ENCODE measurements at regions of chr12 and their contacts with region 1.

Region 1: GRCh38 chr12:112424126-112424525 is 5.4 kb downstream of the PTPN11 start:
- DNase-seq: no peak
- ATAC-seq: no peak
- H3K4me3 ChIP-seq: no peak overlapping the region
- H3K4me3 Mint-ChIP-seq: peak overlapping the region in 5 of 10 donors; percentile 0 to 39 (median 9)
- H3K27ac ChIP-seq: no peak overlapping the region
- H3K27ac Mint-ChIP-seq: peak overlapping the region in 3 of 9 donors; percentile 0 to 6 (median 2)
- H3K4me1 ChIP-seq: peaks cover 30 to 31% of the 10 kb centered on the region in 2 donors
- H3K4me1 Mint-ChIP-seq: peaks cover 33 to 67% (median 57%) of the 10 kb centered on the region in 7 donors
- H3K27me3 ChIP-seq: no peaks in the 10 kb centered on the region
- H3K27me3 Mint-ChIP-seq: no peaks in the 10 kb centered on the region

Region 2: DNA sequence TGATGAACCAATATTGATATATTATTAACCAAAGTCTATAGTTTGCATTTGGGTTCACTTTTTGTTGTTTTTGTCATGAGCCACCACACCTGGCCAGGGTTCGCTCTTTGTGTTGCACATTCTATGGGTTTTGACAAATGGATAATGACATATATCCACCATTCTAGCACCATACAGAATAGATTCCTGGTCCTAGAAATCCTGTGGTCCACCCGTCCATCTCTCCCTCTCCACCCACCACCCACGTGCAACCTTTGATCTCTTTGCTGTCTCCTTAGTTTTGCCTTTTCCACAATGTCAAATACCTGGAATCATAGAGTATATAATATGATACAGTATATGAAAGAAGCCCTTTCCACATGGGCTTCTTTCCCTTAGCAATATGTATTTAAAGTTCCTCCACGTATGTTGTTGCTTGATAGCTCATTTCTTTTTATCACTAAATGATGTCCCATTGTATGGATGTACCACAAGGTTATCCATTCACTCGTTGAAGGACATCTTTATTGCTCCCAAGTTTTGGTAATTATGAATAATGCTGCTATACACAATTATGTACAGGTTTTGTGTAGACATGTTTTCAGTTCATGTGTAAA is 22.1 kb before region 1 on chr12:
- CTCF ChIA-PET with region 1: no interaction called
- POLR2A ChIA-PET with region 1: no interaction called
- intact Hi-C with region 1: no loop called
- DNase-seq: no peak
- ATAC-seq: no peak
- H3K4me3 ChIP-seq: no peak overlapping the region
- H3K4me3 Mint-ChIP-seq: no peak overlapping the region
- H3K27ac ChIP-seq: no peak overlapping the region
- H3K27ac Mint-ChIP-seq: peak overlapping the region in 1 of 9 donors; percentile 26
- H3K4me1 ChIP-seq: peaks cover 0 to 2% of the 10 kb centered on the region in 2 donors
- H3K4me1 Mint-ChIP-seq: peaks cover under 1 to 16% (median 8%) of the 10 kb centered on the region in 7 donors
- H3K27me3 ChIP-seq: no peaks in the 10 kb centered on the region
- H3K27me3 Mint-ChIP-seq: peaks cover 0 to 3% (median 0%) of the 10 kb centered on the region in 5 donors

Region 3: DNA sequence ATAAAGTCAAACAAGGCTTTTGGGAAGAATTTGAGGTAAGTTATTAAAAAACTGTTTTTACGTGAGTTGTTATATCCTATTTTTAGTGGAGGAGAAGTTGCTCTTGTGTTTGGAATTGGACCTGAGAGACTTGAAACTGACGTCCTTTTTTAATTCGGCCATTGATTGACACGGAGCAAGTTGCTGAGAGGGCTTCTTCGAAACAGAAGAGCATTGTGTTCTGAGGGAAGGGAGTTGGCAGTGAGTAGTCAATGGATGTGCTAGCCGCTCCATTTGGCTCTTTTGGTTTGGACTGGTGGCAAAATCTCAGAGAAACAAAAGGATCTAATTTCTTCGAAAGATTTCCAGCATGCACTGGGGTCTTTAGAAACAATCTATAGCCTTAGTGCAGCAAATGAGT is 31.9 kb after region 1 on chr12:
- CTCF ChIA-PET with region 1: no interaction called
- POLR2A ChIA-PET with region 1: interaction called, 10 read pairs
- intact Hi-C with region 1: no loop called
- DNase-seq: no peak
- ATAC-seq: no peak
- H3K4me3 ChIP-seq: no peak overlapping the region
- H3K4me3 Mint-ChIP-seq: no peak overlapping the region
- H3K27ac ChIP-seq: no peak overlapping the region
- H3K27ac Mint-ChIP-seq: no peak overlapping the region
- H3K4me1 ChIP-seq: no peaks in the 10 kb centered on the region
- H3K4me1 Mint-ChIP-seq: peaks cover 0 to 8% (median 0%) of the 10 kb centered on the region in 7 donors
- H3K27me3 ChIP-seq: no peaks in the 10 kb centered on the region
- H3K27me3 Mint-ChIP-seq: no peaks in the 10 kb centered on the region

Measured in naive thymus-derived CD4-positive, alpha-beta T cell (primary cell).